Breast epithelium (tissue), 4 donors: ENCODE measurements at regions of chr1 and their contacts with region 1.

Region 1: GRCh38 chr1:17648457-17649145 is 106.5 kb upstream of the ACTL8 start:
- DNase-seq: peak in 1 of 2 donors; percentile 26
- H3K4me3 ChIP-seq: no peak overlapping the region
- H3K27ac ChIP-seq: peak overlapping the region in 1 of 2 donors; percentile 56
- H3K4me1 ChIP-seq: no peaks in the 10 kb centered on the region
- H3K27me3 ChIP-seq: no peaks in the 10 kb centered on the region
- CTCF ChIP-seq: no peak
- POLR2A ChIP-seq: no peak

Region 2: GRCh38 chr1:17460245-17460644 is 188.4 kb before region 1 on chr1:
- intact Hi-C with region 1: no loop called
- DNase-seq: peak in 1 of 2 donors; percentile 46
- H3K4me3 ChIP-seq: peak overlapping the region in 1 of 3 donors; percentile 22
- H3K27ac ChIP-seq: peak overlapping the region in 1 of 2 donors; percentile 25
- H3K4me1 ChIP-seq: no peaks in the 10 kb centered on the region
- H3K27me3 ChIP-seq: peaks cover 0 to 3% of the 10 kb centered on the region in 2 donors
- CTCF ChIP-seq: no peak
- POLR2A ChIP-seq: no peak

Region 3: GRCh38 chr1:17629460-17629859 is 19.1 kb before region 1 on chr1:
- intact Hi-C with region 1: no loop called
- DNase-seq: no peak
- H3K4me3 ChIP-seq: no peak overlapping the region
- H3K27ac ChIP-seq: peak overlapping the region; percentile 45 to 71
- H3K4me1 ChIP-seq: no peaks in the 10 kb centered on the region
- H3K27me3 ChIP-seq: no peaks in the 10 kb centered on the region
- CTCF ChIP-seq: no peak
- POLR2A ChIP-seq: no peak

Region 4: DNA sequence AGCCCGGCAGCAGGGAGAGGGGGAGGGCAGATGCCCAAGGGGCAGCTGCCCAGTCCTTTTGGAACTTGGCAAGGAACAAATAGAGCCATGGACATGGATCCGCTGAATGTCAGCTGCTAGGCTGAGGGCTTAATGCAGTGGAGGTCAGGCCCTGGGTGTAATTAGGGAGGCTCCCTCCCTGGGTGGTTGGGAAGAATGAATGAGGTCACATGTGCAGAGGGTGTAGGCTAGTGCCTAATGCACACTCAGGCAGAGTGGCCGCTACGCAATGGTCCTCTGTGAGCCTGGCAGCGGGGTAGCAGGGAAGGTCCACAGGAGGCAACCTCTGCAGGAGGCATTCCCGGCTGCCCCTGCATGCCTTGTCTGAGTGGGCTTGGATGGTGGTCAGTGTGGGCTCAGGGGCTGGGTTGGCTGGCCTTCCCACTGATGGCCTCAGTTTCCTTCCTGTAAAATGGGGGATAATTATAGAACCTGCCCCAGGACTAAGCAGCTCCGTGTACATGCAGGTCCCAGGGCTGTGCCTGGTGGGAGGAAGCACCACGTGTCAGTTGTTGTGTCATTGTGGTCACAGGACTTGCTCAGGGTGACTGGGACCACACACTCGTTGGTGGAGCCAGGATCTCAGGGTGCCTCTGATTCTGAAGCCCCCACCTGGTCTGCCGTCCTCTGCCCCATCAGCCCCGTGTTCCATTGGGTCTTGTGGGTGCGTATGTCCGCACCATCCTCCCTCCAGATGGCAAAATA is 24.9 kb after region 1 on chr1:
- intact Hi-C with region 1: loop called (anchors 1 kb)
- DNase-seq: no peak
- H3K4me3 ChIP-seq: no peak overlapping the region
- H3K27ac ChIP-seq: no peak overlapping the region
- H3K4me1 ChIP-seq: no peaks in the 10 kb centered on the region
- H3K27me3 ChIP-seq: no peaks in the 10 kb centered on the region
- CTCF ChIP-seq: no peak
- POLR2A ChIP-seq: no peak

Region 5: GRCh38 chr1:18322368-18323032 is 673.9 kb after region 1 on chr1:
- intact Hi-C with region 1: loop called (anchors 10 kb)
- DNase-seq: no peak
- H3K4me3 ChIP-seq: no peak overlapping the region
- H3K27ac ChIP-seq: no peak overlapping the region
- H3K4me1 ChIP-seq: no peaks in the 10 kb centered on the region
- H3K27me3 ChIP-seq: peaks cover 0 to 6% of the 10 kb centered on the region in 2 donors
- CTCF ChIP-seq: no peak
- POLR2A ChIP-seq: no peak